ENCODE measurements at regions of chr14 and their contacts with region 1.

Region 1: GRCh38 chr14:89707086-89707485 is 247.4 kb downstream of the EFCAB11 start:
- DNase-seq: no peak
- H3K4me3 Mint-ChIP-seq: no peak overlapping the region
- H3K27ac Mint-ChIP-seq: peak overlapping the region; percentile 65
- H3K4me1 Mint-ChIP-seq: peaks cover 31% of the 10 kb centered on the region
- H3K27me3 Mint-ChIP-seq: no peaks in the 10 kb centered on the region

Region 2: DNA sequence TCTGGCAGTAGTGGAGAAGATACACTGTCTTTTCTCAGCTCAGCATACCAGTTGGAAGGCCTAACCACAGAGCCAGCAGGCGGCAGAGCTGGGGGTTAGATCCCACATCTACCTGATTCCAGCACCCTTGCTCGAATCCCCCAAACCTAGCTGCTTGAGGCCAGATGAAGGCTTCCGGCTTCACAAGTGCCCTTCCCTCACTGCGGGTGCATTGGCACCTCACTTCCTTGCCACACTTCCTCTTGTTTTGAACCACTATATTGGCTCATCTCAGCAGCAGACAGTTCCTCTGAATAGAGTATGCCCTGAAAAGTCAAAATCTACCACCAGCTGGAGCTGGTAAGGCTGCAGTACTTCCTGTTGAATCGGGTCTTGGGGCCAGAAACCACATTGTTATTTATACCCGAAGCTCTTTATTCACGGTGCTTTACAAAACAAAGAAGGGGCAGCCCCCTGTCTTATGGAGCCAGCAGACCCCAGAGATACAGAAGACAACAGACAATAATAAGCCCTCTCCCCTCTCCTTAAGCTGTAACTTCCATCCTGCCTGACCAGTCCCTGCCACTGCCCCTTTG is 13.7 kb after region 1 on chr14:
- intact Hi-C with region 1: loop called (anchors 2 kb)
- DNase-seq: peak; percentile 59
- H3K4me3 Mint-ChIP-seq: peak overlapping the region; percentile 49
- H3K27ac Mint-ChIP-seq: peak overlapping the region; percentile 86
- H3K4me1 Mint-ChIP-seq: peaks cover 64% of the 10 kb centered on the region
- H3K27me3 Mint-ChIP-seq: no peaks in the 10 kb centered on the region

Region 3: DNA sequence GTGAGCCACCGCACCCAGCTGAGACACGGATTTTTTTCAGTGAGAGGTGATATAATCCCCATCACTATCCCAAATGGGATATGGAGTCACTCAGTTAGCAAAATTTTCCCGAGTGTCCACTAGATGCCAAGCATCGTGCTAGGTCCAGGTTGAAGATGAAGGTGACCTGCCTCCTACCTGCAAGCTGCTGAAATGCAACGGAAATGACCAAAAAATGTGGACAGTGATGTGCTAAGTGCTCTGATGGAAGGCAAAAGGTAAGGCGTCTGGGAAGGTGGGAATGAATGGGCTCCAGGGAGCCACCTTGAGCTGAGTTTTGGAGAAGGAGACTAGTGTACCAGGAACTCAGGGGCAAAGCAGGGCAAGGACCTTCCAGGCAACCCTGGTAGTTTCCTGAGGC is 754.3 kb after region 1 on chr14:
- intact Hi-C with region 1: no loop called
- DNase-seq: no peak
- H3K4me3 Mint-ChIP-seq: no peak overlapping the region
- H3K27ac Mint-ChIP-seq: no peak overlapping the region
- H3K4me1 Mint-ChIP-seq: no peaks in the 10 kb centered on the region
- H3K27me3 Mint-ChIP-seq: peaks cover 4% of the 10 kb centered on the region

Measured in activated T-helper 1 cell treated with anti-CD3 and anti-CD28 coated beads, Interleukin-12 subunit alpha, Interleukin-12 subunit beta, Interleukin-2, Interleukin-4 antibody, amounts not matched to agents 30 ng/mL and 10 ng/mL and 1 ng/mL, durations not matched to agents 14 hours and 24 hours and 36 hours (primary cell).